ENCODE measurements at regions of chr19 and their contacts with region 1.

Region 1: DNA sequence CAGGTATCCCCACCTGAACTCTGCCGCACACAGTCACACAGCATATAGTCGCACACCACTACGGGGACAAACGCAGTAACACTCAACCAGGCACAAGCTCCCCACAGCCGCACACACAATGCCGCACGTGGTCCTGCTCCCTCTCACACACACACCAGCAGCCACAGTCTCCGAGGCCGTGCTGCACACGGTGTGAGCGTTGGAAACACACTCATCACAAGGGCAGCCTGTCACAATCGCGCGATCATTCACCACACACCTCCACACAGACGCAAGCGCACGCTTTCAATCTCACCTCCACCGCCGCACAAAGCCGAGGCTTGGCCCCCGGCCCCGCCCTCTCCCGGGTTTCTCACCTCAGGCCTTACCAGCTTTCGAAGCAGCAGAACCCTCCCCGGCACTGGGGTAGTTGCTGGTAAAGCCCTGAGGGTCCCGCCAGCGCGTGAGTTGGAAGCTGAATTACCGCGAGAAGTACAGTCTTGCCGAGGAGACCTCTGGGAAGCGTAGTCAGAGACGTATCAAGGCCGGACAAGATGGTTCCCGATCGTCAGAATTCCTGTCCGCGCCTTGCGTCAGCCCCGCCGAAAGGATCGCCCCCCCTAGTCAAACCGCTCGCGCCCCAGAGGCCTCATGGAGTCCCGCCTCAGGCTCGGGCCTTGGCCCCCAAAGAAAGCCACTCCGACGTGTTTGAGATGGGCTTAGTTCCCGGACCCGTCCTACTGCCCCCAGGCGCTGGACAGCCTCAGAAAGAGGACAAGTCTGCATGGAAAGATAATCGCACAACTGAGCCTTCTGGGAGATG is at the start of gene ZNF566:
- DNase-seq: peak; percentile 98
- H3K4me3 ChIP-seq: peak within 1 kb of the TSS; percentile 77
- H3K27ac ChIP-seq: peak within 1 kb of the TSS; percentile 90
- H3K4me1 ChIP-seq: peaks cover 50% of the 10 kb centered on the region
- CTCF ChIP-seq: 0 out of 2 replicates have a peak, but pooled peaks have one; percentile 28
- total RNA-seq, gene ZNF566: 16.1 and 29.5 TPM in 2 replicates

Region 2: GRCh38 chr19:36196249-36196648 is 293.1 kb before region 1 on chr19:
- CTCF ChIA-PET with region 1: no interaction called
- POLR2A ChIA-PET with region 1: no interaction called
- intact Hi-C with region 1: loop called (anchors 2 kb)
- DNase-seq: peak; percentile 55
- H3K4me3 ChIP-seq: no peak overlapping the region
- H3K27ac ChIP-seq: no peak overlapping the region
- H3K4me1 ChIP-seq: peaks cover 10% of the 10 kb centered on the region
- CTCF ChIP-seq: no peak

Region 3: DNA sequence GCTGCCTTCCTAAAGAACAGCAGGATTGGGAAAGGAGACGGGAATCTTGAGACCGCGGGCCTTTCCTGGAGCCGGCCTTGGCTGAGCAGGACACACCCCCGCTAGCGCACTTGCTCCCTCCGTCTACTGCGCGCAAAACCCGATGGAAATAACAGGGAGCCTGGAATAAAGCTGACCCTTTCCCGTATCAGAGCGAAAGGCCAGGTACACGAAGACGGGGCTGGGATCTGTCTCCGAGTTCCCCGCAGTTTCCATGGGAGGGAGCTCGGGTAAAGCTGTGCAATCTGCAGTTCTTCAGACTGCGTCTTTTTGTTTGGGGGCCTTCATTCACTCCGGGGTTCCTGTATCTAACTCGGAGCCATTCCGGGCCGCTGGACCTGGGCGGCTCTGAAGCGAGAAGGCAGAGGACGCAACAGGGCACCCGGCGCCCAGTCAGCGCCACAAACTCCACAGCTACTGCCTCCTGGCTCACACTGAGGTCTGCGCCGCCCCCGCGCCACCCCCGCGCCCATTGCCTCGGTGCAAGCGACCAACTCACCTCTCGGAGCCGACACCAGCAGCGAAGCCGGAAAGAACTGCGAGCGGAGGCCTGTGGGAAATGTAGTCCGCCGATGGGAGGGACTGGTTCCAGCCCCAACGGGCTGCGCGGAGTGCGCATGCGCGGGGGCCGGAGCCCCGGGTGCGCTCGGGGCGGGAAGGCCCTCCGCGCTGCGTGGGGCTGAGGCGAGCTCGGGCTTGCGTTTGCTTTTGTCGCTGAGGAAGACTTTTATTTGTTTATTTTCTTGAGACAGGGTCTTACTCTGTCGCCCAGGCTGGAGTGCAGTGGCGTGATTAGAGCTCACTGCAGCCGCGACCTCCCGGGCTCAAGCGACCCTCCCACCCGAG is 110.5 kb before region 1 on chr19 and contains the start of gene ZFP14:
- CTCF ChIA-PET with region 1: no interaction called
- POLR2A ChIA-PET with region 1: no interaction called
- intact Hi-C with region 1: loop called (anchors 1 kb)
- DNase-seq: peak; percentile 94
- H3K4me3 ChIP-seq: peak within 1 kb of the TSS; percentile 78
- H3K27ac ChIP-seq: peak within 1 kb of the TSS; percentile 48
- H3K4me1 ChIP-seq: peaks cover 23% of the 10 kb centered on the region
- CTCF ChIP-seq: peak; percentile 71
- total RNA-seq, gene ZFP14: 4.5 and 5.2 TPM in 2 replicates

Region 4: DNA sequence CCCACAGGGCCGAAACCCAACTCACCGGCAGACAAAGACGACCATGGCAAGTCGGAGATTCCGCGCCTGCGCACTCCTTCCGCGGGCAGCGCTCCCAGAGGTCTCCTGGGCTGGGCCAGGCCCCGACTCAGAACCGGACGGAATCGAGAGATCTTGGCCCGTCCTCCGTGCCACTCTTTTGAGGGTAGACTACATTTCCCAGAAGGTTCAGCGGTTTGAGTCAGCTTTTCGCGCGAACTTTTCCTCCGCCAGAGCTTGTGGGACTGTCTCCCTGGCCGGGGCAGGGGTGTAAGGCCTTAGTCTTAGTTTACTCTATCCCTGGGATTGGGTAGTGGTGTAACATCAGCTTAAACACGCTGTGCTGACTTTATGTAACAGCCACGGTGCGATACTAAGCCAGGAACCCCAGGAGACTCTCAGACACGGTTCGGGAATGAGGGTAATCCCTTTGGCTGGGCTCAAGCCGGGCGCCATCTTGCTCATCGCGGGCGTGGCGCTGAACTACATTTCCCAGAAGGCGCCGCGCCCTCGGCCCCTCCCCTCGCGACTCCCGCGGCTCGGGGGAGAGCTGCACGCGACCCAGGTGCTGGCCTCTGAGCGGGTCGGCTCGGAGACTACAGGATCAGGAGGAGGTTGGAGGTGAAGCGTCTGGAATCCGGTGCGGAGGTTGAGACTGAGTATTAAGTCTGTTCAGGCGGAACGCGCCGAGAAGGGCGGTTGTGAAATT is 39.0 kb after region 1 on chr19 and contains the start of gene ZNF260:
- CTCF ChIA-PET with region 1: no interaction called
- POLR2A ChIA-PET with region 1: interaction called, 10 read pairs
- intact Hi-C with region 1: loop called (anchors 2 kb)
- DNase-seq: peak; percentile 94
- H3K4me3 ChIP-seq: peak within 1 kb of the TSS; percentile 84
- H3K27ac ChIP-seq: peak within 1 kb of the TSS; percentile 66
- H3K4me1 ChIP-seq: peaks cover 18% of the 10 kb centered on the region
- CTCF ChIP-seq: no peak
- total RNA-seq, gene ZNF260: 9.9 and 11.1 TPM in 2 replicates

Measured in OCI-LY7 (cell line).